Caco-2 (cell line): ENCODE measurements at regions of chr11 and their contacts with region 1.

Region 1: DNA sequence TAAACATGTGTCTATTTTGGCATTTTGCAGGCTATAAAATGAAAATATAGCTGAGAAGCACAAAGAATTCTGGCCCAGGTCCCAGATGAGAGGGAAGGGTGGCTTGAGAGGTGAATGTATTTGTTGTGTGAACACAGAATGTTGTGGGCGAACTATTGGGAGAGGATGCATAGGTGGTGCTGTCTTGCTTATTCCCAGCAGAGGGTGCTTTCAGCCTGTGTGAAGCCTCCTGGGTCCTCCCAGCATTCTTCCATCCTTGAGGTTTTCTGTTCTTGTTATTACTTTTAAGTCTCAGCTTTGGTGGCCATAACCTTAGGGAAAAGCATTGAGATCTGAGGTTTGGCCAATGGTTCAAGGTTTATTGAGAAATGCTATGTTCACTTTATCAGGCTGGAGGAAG is 108.7 kb upstream of the SNX19 start:
- DNase-seq: peak in 1 of 2 experiments; percentile 44
- H3K4me3 ChIP-seq: no peak overlapping the region
- H3K4me3 Mint-ChIP-seq: no peak overlapping the region
- H3K27ac Mint-ChIP-seq: no peak overlapping the region
- H3K4me1 ChIP-seq: no peaks in the 10 kb centered on the region
- H3K4me1 Mint-ChIP-seq: no peaks in the 10 kb centered on the region
- H3K27me3 ChIP-seq: no peaks in the 10 kb centered on the region
- H3K27me3 Mint-ChIP-seq: peaks cover 33% of the 10 kb centered on the region
- CTCF ChIP-seq: peak; percentile 67 to 77

Region 2: GRCh38 chr11:131109257-131109656 is 84.2 kb after region 1 on chr11:
- CTCF ChIA-PET with region 1: no interaction called
- POLR2A ChIA-PET with region 1: no interaction called
- intact Hi-C with region 1: no loop called
- DNase-seq: no peak
- H3K4me3 ChIP-seq: no peak overlapping the region
- H3K4me3 Mint-ChIP-seq: no peak overlapping the region
- H3K27ac Mint-ChIP-seq: no peak overlapping the region
- H3K4me1 ChIP-seq: no peaks in the 10 kb centered on the region
- H3K4me1 Mint-ChIP-seq: no peaks in the 10 kb centered on the region
- H3K27me3 ChIP-seq: no peaks in the 10 kb centered on the region
- H3K27me3 Mint-ChIP-seq: peaks cover 4% of the 10 kb centered on the region
- CTCF ChIP-seq: no peak

Region 3: GRCh38 chr11:131217313-131218310 is 192.6 kb after region 1 on chr11:
- CTCF ChIA-PET with region 1: no interaction called
- POLR2A ChIA-PET with region 1: no interaction called
- intact Hi-C with region 1: loop called (anchors 1 kb)
- DNase-seq: peak in 1 of 2 experiments; percentile 40
- H3K4me3 ChIP-seq: no peak overlapping the region
- H3K4me3 Mint-ChIP-seq: no peak overlapping the region
- H3K27ac Mint-ChIP-seq: no peak overlapping the region
- H3K4me1 ChIP-seq: no peaks in the 10 kb centered on the region
- H3K4me1 Mint-ChIP-seq: no peaks in the 10 kb centered on the region
- H3K27me3 ChIP-seq: no peaks in the 10 kb centered on the region
- H3K27me3 Mint-ChIP-seq: peaks cover 36% of the 10 kb centered on the region
- CTCF ChIP-seq: peak; percentile 48 to 80